ENCODE measurements at regions of chr1 and their contacts with region 1.

Region 1: GRCh38 chr1:185044981-185045813 is at the start of gene RNF2:
- DNase-seq: peak; percentile 85
- H3K4me3 Mint-ChIP-seq: peak within 1 kb of the TSS; percentile 90
- H3K27ac Mint-ChIP-seq: peak within 1 kb of the TSS; percentile 72
- H3K4me1 Mint-ChIP-seq: peaks cover 39% of the 10 kb centered on the region
- H3K27me3 Mint-ChIP-seq: no peaks in the 10 kb centered on the region
- total RNA-seq, gene RNF2: 20.7 to 21.2 TPM

Region 2: GRCh38 chr1:184881941-184882913 is 163.0 kb before region 1 on chr1:
- CTCF ChIA-PET with region 1: no interaction called
- POLR2A ChIA-PET with region 1: no interaction called
- intact Hi-C with region 1: loop called (anchors 10 kb)
- DNase-seq: peak; percentile 48
- H3K4me3 Mint-ChIP-seq: peak overlapping the region; percentile 13
- H3K27ac Mint-ChIP-seq: peak overlapping the region; percentile 92
- H3K4me1 Mint-ChIP-seq: peaks cover 33% of the 10 kb centered on the region
- H3K27me3 Mint-ChIP-seq: peaks cover 2% of the 10 kb centered on the region

Region 3: GRCh38 chr1:185058876-185059275 is 13.7 kb after region 1 on chr1:
- CTCF ChIA-PET with region 1: no interaction called
- POLR2A ChIA-PET with region 1: no interaction called
- intact Hi-C with region 1: no loop called
- DNase-seq: no peak
- H3K4me3 Mint-ChIP-seq: no peak overlapping the region
- H3K27ac Mint-ChIP-seq: no peak overlapping the region
- H3K4me1 Mint-ChIP-seq: peaks cover 49% of the 10 kb centered on the region
- H3K27me3 Mint-ChIP-seq: no peaks in the 10 kb centered on the region

Region 4: DNA sequence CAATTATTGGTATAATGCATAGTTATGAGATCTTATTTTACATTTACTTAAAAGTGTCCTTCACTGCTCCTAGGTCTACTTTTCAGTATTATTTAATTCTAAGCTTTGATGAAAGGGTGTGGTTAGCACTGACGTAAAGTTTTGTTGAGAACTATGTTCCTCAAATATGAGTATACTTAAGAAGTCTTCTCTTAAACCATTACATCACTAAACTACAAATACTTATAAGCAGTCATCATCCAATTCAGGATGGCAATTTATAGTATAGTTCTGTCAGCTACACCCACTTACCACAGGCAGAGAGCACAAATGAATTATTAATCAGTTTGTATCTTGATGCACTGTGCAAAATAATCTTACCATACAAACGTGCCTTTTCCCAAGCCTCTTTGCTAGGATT is 84.5 kb after region 1 on chr1:
- CTCF ChIA-PET with region 1: no interaction called
- POLR2A ChIA-PET with region 1: no interaction called
- intact Hi-C with region 1: no loop called
- DNase-seq: no peak
- H3K4me3 Mint-ChIP-seq: no peak overlapping the region
- H3K27ac Mint-ChIP-seq: no peak overlapping the region
- H3K4me1 Mint-ChIP-seq: no peaks in the 10 kb centered on the region
- H3K27me3 Mint-ChIP-seq: no peaks in the 10 kb centered on the region

Region 5: GRCh38 chr1:185170291-185170848 is 125.2 kb after region 1 on chr1:
- CTCF ChIA-PET with region 1: interaction called, 10 read pairs
- POLR2A ChIA-PET with region 1: no interaction called
- intact Hi-C with region 1: no loop called
- DNase-seq: peak; percentile 33
- H3K4me3 Mint-ChIP-seq: no peak overlapping the region
- H3K27ac Mint-ChIP-seq: no peak overlapping the region
- H3K4me1 Mint-ChIP-seq: peaks cover 5% of the 10 kb centered on the region
- H3K27me3 Mint-ChIP-seq: no peaks in the 10 kb centered on the region

Region 6: DNA sequence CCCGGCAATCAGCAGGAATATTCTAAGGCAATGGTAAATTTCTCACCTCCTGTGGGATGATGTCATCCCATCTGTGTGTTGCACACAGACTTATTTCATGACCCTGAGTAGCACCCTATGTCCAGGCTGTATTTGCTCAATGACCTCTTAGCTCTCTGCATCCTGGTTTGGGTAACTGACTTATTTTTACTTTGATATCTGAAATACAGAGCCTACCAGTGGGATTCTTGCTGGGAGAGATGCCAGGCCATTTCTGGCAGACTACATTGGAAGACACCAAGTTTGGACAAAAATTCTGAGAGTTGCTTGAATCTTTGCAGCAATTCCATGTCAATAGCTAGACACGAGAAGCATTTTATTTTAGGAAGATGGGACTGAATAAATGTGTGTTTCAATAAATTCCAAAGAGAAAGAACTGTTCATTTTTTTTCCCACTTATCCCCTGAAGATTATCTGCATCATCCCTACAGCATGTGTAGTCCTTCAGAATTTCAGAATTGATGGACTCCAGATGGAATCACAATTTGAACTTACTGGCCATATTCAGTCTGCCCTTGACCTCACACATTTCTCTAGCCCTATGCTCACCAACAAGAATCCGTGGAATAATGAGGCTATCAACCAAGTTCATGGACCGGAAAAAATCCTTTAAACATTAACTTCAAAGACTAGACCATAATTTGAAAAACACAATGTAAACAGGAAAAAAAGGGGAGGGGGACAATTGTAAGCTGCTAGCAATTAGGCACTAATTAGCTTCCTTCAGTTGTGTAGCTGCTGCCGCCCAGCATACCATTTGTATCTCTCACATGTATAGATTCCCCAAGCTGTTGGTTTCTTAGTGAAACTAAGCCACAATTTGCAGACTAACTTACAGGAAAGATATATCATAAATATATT is 915.5 kb after region 1 on chr1:
- CTCF ChIA-PET with region 1: no interaction called
- POLR2A ChIA-PET with region 1: no interaction called
- intact Hi-C with region 1: no loop called
- DNase-seq: no peak
- H3K4me3 Mint-ChIP-seq: no peak overlapping the region
- H3K27ac Mint-ChIP-seq: no peak overlapping the region
- H3K4me1 Mint-ChIP-seq: no peaks in the 10 kb centered on the region
- H3K27me3 Mint-ChIP-seq: peaks cover 8% of the 10 kb centered on the region

Measured in activated CD4-positive, alpha-beta memory T cell treated with anti-CD3 and anti-CD28 coated beads for 36 hours (primary cell).